ENCODE measurements at regions of chr12 and their contacts with region 1.

Region 1: GRCh38 chr12:15882118-15882971 is at the start of gene STRAP:
- DNase-seq: peak; percentile 97
- ATAC-seq: peak; percentile 98
- H3K4me3 Mint-ChIP-seq: peak within 1 kb of the TSS; percentile 95
- H3K27ac Mint-ChIP-seq: peak within 1 kb of the TSS; percentile 98
- H3K4me1 Mint-ChIP-seq: peaks cover 42% of the 10 kb centered on the region
- H3K27me3 Mint-ChIP-seq: no peaks in the 10 kb centered on the region
- total RNA-seq, gene STRAP: 133 to 139 TPM

Region 2: DNA sequence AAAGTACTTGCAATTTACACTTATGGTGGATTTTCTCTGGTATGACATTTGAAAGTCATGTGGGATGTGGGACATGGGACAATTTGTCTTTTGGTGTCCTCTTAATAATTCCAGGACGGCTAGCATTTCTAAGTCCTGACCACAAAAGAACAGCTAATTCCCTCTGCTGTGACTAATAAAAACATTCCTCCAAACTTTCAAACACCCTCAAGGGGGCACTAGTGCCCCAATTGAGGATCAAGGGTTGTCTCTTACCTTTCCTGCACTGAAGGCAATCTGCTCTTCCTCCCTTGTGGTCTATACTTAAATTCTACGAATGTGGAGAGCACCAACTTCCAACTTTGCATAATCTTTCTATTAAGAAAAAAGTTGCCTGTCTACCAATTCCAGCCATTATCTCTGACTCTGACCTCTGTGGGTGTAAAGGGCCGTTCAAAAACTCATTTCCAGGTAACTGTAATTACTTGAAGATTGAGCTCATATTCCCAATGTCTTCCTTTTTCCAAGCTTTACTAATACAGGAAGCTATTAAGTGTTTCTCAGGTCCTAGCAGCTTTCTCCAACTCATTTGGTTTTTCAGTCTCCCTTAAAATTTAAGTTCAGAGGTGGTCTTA is 349.9 kb before region 1 on chr12:
- CTCF ChIA-PET with region 1: no interaction called
- POLR2A ChIA-PET with region 1: no interaction called
- intact Hi-C with region 1: loop called in 1 of 2 experiments (anchors 5 kb)
- DNase-seq: peak; percentile 66
- ATAC-seq: peak; percentile 76
- H3K4me3 Mint-ChIP-seq: no peak overlapping the region
- H3K27ac Mint-ChIP-seq: no peak overlapping the region
- H3K4me1 Mint-ChIP-seq: no peaks in the 10 kb centered on the region
- H3K27me3 Mint-ChIP-seq: no peaks in the 10 kb centered on the region

Region 3: GRCh38 chr12:15700595-15700994 is 181.8 kb before region 1 on chr12:
- CTCF ChIA-PET with region 1: no interaction called
- POLR2A ChIA-PET with region 1: no interaction called
- intact Hi-C with region 1: loop called in 1 of 2 experiments (anchors 2 kb)
- DNase-seq: no peak
- ATAC-seq: peak; percentile 83
- H3K4me3 Mint-ChIP-seq: no peak overlapping the region
- H3K27ac Mint-ChIP-seq: peak overlapping the region; percentile 52
- H3K4me1 Mint-ChIP-seq: peaks cover 26% of the 10 kb centered on the region
- H3K27me3 Mint-ChIP-seq: peaks cover 7% of the 10 kb centered on the region

Region 4: GRCh38 chr12:15842108-15842507 is 40.2 kb before region 1 on chr12:
- CTCF ChIA-PET with region 1: no interaction called
- POLR2A ChIA-PET with region 1: no interaction called
- intact Hi-C with region 1: no loop called
- DNase-seq: no peak
- ATAC-seq: no peak
- H3K4me3 Mint-ChIP-seq: no peak overlapping the region
- H3K27ac Mint-ChIP-seq: no peak overlapping the region
- H3K4me1 Mint-ChIP-seq: no peaks in the 10 kb centered on the region
- H3K27me3 Mint-ChIP-seq: peaks cover 6% of the 10 kb centered on the region

Region 5: GRCh38 chr12:15899282-15899870 is 17.0 kb after region 1 on chr12:
- CTCF ChIA-PET with region 1: interaction called, 39 read pairs
- POLR2A ChIA-PET with region 1: interaction called, 3 read pairs
- intact Hi-C with region 1: loop called in 1 of 2 experiments (anchors 2 kb)
- DNase-seq: no peak
- ATAC-seq: no peak
- H3K4me3 Mint-ChIP-seq: no peak overlapping the region
- H3K27ac Mint-ChIP-seq: no peak overlapping the region
- H3K4me1 Mint-ChIP-seq: peaks cover 2% of the 10 kb centered on the region
- H3K27me3 Mint-ChIP-seq: no peaks in the 10 kb centered on the region

Measured in activated CD4-positive, alpha-beta T cell treated with anti-CD3 and anti-CD28 coated beads for 36 hours (primary cell).